ENCODE measurements at regions of chr10 and their contacts with region 1.

Region 1: DNA sequence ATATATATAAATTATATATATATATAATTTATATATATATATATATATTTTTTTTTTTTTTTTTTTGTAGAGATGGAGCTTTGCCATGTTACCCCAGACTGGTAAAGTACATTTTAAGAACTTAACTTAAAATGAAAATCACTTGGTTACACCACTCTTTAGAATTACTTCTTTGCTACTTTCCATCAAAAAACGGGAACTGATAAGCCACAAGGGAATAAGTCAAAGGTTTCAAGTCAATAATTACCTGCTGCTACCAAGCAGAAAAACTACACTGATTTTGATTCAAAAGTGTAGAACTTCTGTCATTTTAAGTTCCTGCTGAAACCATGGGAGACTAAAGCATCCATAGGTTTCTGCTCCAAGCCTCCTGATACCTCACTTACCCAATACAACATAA is 12.2 kb downstream of the PPA1 start:
- DNase-seq: no peak
- ATAC-seq: peak; percentile 41
- H3K4me3 ChIP-seq: peak overlapping the region; percentile 14; the same call in 1 of the 2 replicates
- H3K27ac ChIP-seq: peak overlapping the region; percentile 52; the same call in 1 of the 2 replicates
- H3K4me1 ChIP-seq: peaks cover 21% of the 10 kb centered on the region
- H3K27me3 ChIP-seq: no peaks in the 10 kb centered on the region
- CTCF ChIP-seq: no peak
- EP300 ChIP-seq: no peak
- POLR2A ChIP-seq: no peak
- RAD21 ChIP-seq: no peak

Region 2: DNA sequence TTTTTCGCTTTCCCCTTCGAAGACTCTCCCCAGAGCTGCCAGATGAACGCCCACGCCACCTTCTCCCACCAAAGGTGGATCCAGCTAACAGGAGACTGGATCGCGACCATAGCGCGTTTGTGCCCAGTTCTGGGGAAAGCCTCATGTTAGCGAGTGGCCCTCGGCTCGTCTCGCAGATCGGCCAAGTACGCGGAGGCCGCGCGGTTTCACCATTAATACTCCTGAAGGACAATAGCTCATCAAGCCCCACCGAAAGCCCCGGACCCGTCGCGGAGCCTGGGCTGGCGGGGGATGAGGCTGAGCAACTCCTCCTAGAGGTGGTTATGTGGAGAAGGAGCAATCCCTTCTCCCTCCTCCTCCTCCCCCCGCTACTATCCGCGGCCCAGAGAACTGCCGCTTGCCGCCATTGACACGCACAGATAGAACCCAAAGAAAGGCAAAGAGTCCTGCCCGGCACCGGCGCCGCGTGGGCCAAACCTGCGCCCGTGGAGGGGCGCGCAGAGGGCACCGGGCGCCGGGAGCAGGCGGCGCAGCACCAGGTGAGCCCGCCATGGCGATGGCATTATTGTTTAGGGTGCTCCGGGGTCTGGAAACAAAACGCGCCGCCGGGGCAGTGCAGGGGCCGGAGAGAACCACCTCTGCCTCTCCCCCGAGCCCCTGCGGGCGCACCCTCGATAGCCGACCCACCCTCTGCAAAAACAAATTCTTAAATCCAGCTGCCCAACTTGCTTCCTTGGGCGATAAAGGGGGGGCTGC is 168.4 kb before region 1 on chr10 and contains the start of gene MACROH2A2:
- CTCF ChIA-PET with region 1: no interaction called
- POLR2A ChIA-PET with region 1: no interaction called
- RAD21 ChIA-PET with region 1: no interaction called
- SMC1A ChIA-PET with region 1: no interaction called
- in situ Hi-C with region 1: no loop called
- intact Hi-C with region 1: no loop called
- DNase-seq: no peak
- ATAC-seq: no peak
- H3K4me3 ChIP-seq: no peak within 1 kb of the TSS
- H3K27ac ChIP-seq: no peak within 1 kb of the TSS
- H3K4me1 ChIP-seq: no peaks in the 10 kb centered on the region
- H3K27me3 ChIP-seq: peaks cover 9% of the 10 kb centered on the region in 2 experiments
- CTCF ChIP-seq: no peak
- EP300 ChIP-seq: no peak
- POLR2A ChIP-seq: no peak
- RAD21 ChIP-seq: no peak
- polyA plus RNA-seq, gene MACROH2A2: not detected

Region 3: GRCh38 chr10:70115948-70116682 is 104.9 kb before region 1 on chr10:
- CTCF ChIA-PET with region 1: interaction called, 24 read pairs
- POLR2A ChIA-PET with region 1: no interaction called
- RAD21 ChIA-PET with region 1: interaction called, 8 read pairs
- SMC1A ChIA-PET with region 1: interaction called, 7 read pairs
- in situ Hi-C with region 1: no loop called
- intact Hi-C with region 1: no loop called
- DNase-seq: no peak
- ATAC-seq: peak; percentile 97
- H3K4me3 ChIP-seq: no peak overlapping the region
- H3K27ac ChIP-seq: no peak overlapping the region
- H3K4me1 ChIP-seq: no peaks in the 10 kb centered on the region
- H3K27me3 ChIP-seq: no peaks in the 10 kb centered on the region
- CTCF ChIP-seq: peak; percentile 73 to 93 (median 85)
- EP300 ChIP-seq: no peak
- POLR2A ChIP-seq: no peak
- RAD21 ChIP-seq: peak; percentile 50

Region 4: DNA sequence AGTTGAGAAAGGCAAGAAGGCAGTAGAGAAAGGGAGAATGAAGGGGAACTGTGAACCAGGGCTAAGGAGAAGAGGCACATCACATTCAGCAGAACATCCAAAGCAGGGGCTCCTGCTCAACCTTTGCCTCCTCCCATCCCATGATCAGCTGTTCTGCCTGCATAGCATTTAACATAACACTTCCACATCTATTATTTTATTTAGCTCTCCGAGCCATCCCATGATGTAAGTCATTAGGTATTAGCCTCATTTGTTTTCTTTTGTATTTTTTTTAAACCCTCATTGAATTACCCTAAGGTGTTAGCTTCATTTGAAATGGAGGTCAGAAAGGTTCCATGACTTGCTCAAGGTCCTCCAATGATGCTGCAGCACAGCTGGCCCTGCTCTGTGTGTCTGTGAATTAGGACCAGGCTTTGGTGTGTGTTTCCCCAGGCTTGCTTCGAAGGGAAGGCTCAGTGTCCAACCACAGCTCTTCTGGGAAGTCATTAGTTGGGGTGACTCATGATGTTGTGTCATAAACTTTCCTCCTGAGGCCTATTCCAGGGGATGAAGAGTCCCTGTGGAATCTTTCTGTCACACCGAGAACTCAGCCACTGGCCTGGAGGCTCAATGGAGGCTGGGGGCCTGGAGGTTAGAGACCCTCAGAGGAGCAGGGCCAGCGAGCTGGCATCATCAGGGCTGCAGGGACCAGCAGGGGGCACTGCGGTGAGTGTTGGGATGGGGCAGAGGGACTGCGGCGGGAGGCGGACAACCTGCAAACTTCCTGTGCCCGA is 46.3 kb after region 1 on chr10:
- CTCF ChIA-PET with region 1: interaction called, 133 read pairs
- POLR2A ChIA-PET with region 1: interaction called, 5 read pairs
- RAD21 ChIA-PET with region 1: interaction called, 85 read pairs
- SMC1A ChIA-PET with region 1: interaction called, 45 read pairs
- in situ Hi-C with region 1: no loop called
- intact Hi-C with region 1: loop called (anchors 2 kb)
- DNase-seq: no peak
- ATAC-seq: peak; percentile 35
- H3K4me3 ChIP-seq: no peak overlapping the region
- H3K27ac ChIP-seq: no peak overlapping the region
- H3K4me1 ChIP-seq: peaks cover 16% of the 10 kb centered on the region
- H3K27me3 ChIP-seq: no peaks in the 10 kb centered on the region
- CTCF ChIP-seq: peak; percentile 10 to 41 (median 27); a peak in 4 of 6 replicates
- EP300 ChIP-seq: no peak
- POLR2A ChIP-seq: no peak
- RAD21 ChIP-seq: no peak

Region 5: GRCh38 chr10:70293169-70293813 is 72.3 kb after region 1 on chr10:
- CTCF ChIA-PET with region 1: interaction called, 11 read pairs
- POLR2A ChIA-PET with region 1: interaction called, 3 read pairs
- RAD21 ChIA-PET with region 1: interaction called, 7 read pairs
- SMC1A ChIA-PET with region 1: interaction called, 14 read pairs
- in situ Hi-C with region 1: no loop called
- intact Hi-C with region 1: no loop called
- DNase-seq: peak; percentile 71
- ATAC-seq: peak; percentile 96
- H3K4me3 ChIP-seq: no peak overlapping the region
- H3K27ac ChIP-seq: peak overlapping the region; percentile 41
- H3K4me1 ChIP-seq: peaks cover 16% of the 10 kb centered on the region
- H3K27me3 ChIP-seq: no peaks in the 10 kb centered on the region
- CTCF ChIP-seq: no peak
- EP300 ChIP-seq: peak; percentile 77 to 84; a peak in 3 of 4 replicates
- POLR2A ChIP-seq: no peak
- RAD21 ChIP-seq: no peak

Region 6: GRCh38 chr10:70348228-70348850 is 127.3 kb after region 1 on chr10:
- CTCF ChIA-PET with region 1: interaction called, 165 read pairs
- POLR2A ChIA-PET with region 1: interaction called, 5 read pairs
- RAD21 ChIA-PET with region 1: interaction called, 675 read pairs
- SMC1A ChIA-PET with region 1: interaction called, 72 read pairs
- in situ Hi-C with region 1: no loop called
- intact Hi-C with region 1: no loop called
- DNase-seq: no peak
- ATAC-seq: peak; percentile 94
- H3K4me3 ChIP-seq: no peak overlapping the region
- H3K27ac ChIP-seq: no peak overlapping the region
- H3K4me1 ChIP-seq: peaks cover 11% of the 10 kb centered on the region
- H3K27me3 ChIP-seq: no peaks in the 10 kb centered on the region
- CTCF ChIP-seq: peak; percentile 61 to 65 (median 64)
- EP300 ChIP-seq: no peak
- POLR2A ChIP-seq: no peak
- RAD21 ChIP-seq: peak; percentile 68

Region 7: GRCh38 chr10:70381471-70382421 is 160.7 kb after region 1 on chr10:
- CTCF ChIA-PET with region 1: interaction called, 24 read pairs
- POLR2A ChIA-PET with region 1: no interaction called
- RAD21 ChIA-PET with region 1: interaction called, 18 read pairs
- SMC1A ChIA-PET with region 1: interaction called, 13 read pairs
- in situ Hi-C with region 1: no loop called
- intact Hi-C with region 1: no loop called
- DNase-seq: no peak
- ATAC-seq: peak; percentile 61
- H3K4me3 ChIP-seq: peak overlapping the region; percentile 86
- H3K27ac ChIP-seq: peak overlapping the region; percentile 42
- H3K4me1 ChIP-seq: peaks cover 10% of the 10 kb centered on the region
- H3K27me3 ChIP-seq: no peaks in the 10 kb centered on the region
- CTCF ChIP-seq: no peak; a peak in 1 of 6 replicates
- EP300 ChIP-seq: no peak
- POLR2A ChIP-seq: no peak
- RAD21 ChIP-seq: no peak

Measured in GM12878 (cell line).